ENCODE measurements at regions of chr12 and their contacts with region 1.

Region 1: DNA sequence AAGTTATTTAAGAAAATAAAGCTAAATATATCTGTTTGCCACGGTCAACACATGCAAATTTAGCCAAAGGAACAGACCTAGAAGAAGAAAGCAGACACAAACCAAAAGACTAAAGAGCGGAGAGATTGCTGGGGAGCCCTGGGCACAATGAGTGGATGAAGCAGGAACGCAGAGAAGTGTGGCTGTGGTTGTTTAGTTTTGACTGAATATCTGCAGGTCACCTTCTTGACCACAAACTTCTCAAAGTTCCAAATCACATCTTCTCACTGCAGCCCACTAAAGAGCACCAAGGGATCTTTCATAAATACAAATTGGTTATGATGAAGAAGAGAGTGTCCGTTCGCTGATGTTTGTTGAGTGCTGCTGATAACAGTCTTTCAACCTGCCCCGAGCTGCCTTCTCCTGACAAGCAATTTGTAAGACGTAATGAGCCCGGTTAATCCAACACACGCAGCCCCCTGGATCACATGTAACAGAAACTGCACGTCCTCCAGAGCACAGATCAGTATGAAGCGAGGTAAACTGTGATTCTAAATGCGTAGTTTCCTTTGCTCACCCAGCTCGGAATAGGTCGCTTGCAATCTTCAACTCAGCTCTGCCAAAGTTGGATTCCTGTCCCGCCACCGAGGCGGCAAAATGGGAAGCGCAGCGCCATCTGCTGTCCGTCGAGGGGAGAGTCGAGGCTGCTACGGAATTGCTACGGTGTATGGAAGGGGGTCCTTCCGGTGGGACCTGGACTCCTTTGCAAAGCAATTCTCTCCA is 120.8 kb downstream of the GXYLT1 start:
- DNase-seq: peak; percentile 48 to 78 (median 59)
- ATAC-seq: peak; percentile 83
- H3K4me3 ChIP-seq: peak overlapping the region; percentile 36
- H3K4me3 Mint-ChIP-seq: peak overlapping the region; percentile 73
- H3K27ac ChIP-seq: no peak overlapping the region
- H3K27ac Mint-ChIP-seq: no peak overlapping the region
- H3K4me1 ChIP-seq: peaks cover 8% of the 10 kb centered on the region
- H3K4me1 Mint-ChIP-seq: peaks cover 9% of the 10 kb centered on the region
- H3K27me3 ChIP-seq: peaks cover 3 to 8% of the 10 kb centered on the region in 2 experiments
- H3K27me3 Mint-ChIP-seq: peaks cover 25% of the 10 kb centered on the region
- CTCF ChIP-seq: peak; percentile 90

Region 2: GRCh38 chr12:40946612-40947194 is 1077.2 kb before region 1 on chr12:
- CTCF ChIA-PET with region 1: no interaction called
- POLR2A ChIA-PET with region 1: no interaction called
- intact Hi-C with region 1: loop called (anchors 5 kb)
- DNase-seq: peak in 3 of 14 experiments; percentile 35 to 41 (median 35)
- ATAC-seq: no peak
- H3K4me3 ChIP-seq: no peak overlapping the region
- H3K4me3 Mint-ChIP-seq: no peak overlapping the region
- H3K27ac ChIP-seq: no peak overlapping the region
- H3K27ac Mint-ChIP-seq: no peak overlapping the region
- H3K4me1 ChIP-seq: no peaks in the 10 kb centered on the region
- H3K4me1 Mint-ChIP-seq: no peaks in the 10 kb centered on the region
- H3K27me3 ChIP-seq: peaks cover 0 to 3% of the 10 kb centered on the region in 2 experiments
- H3K27me3 Mint-ChIP-seq: peaks cover 4% of the 10 kb centered on the region
- CTCF ChIP-seq: peak; percentile 60

Region 3: DNA sequence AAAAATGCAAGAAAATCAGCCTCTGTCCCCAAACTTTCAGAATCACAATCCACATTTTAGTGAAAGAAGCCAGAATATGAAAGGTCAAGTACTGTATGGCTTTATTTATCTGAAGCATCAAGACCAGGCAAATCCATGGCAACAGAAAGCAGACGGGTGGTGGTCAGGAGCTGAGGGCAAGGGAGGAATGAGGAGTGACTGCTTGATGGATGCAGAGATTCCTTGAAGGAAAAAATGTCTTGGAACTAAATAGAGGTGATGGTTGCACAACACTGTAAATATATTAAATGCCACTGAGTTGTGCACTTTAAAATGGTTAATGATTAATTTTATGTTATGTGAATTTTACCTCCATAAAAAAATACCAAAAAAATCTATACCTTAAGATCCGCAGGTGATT is 44.3 kb before region 1 on chr12:
- CTCF ChIA-PET with region 1: no interaction called
- POLR2A ChIA-PET with region 1: no interaction called
- intact Hi-C with region 1: no loop called
- DNase-seq: no peak
- ATAC-seq: no peak
- H3K4me3 ChIP-seq: no peak overlapping the region
- H3K4me3 Mint-ChIP-seq: no peak overlapping the region
- H3K27ac ChIP-seq: no peak overlapping the region
- H3K27ac Mint-ChIP-seq: no peak overlapping the region
- H3K4me1 ChIP-seq: no peaks in the 10 kb centered on the region
- H3K4me1 Mint-ChIP-seq: no peaks in the 10 kb centered on the region
- H3K27me3 ChIP-seq: peaks cover 0 to 6% of the 10 kb centered on the region in 2 experiments
- H3K27me3 Mint-ChIP-seq: peaks cover 15% of the 10 kb centered on the region
- CTCF ChIP-seq: no peak

Region 4: GRCh38 chr12:42407306-42407705 is 383.4 kb after region 1 on chr12:
- CTCF ChIA-PET with region 1: no interaction called
- POLR2A ChIA-PET with region 1: no interaction called
- intact Hi-C with region 1: no loop called
- DNase-seq: no peak
- ATAC-seq: no peak
- H3K4me3 ChIP-seq: no peak overlapping the region
- H3K4me3 Mint-ChIP-seq: no peak overlapping the region
- H3K27ac ChIP-seq: no peak overlapping the region
- H3K27ac Mint-ChIP-seq: no peak overlapping the region
- H3K4me1 ChIP-seq: no peaks in the 10 kb centered on the region
- H3K4me1 Mint-ChIP-seq: peaks cover 20% of the 10 kb centered on the region
- H3K27me3 ChIP-seq: no peaks in the 10 kb centered on the region
- H3K27me3 Mint-ChIP-seq: no peaks in the 10 kb centered on the region
- CTCF ChIP-seq: no peak

Region 5: DNA sequence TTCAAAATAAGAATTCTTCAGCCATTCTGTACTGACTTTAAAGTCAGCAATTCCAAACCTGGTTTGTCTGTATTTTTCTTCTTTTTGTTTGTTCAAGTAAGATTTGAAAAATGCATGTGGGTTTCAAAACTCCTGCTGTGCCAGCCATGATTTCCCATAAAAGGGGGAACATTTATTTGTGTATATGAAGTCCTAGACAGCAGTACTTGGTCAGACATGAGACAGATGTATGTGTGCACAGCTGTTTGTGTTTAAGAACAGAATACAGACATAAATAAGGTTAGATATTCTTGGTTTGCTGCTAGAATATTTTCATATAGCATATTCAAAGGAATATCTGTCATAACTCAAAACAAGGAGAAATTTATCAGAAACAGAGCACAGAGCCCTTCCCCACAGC is 1292.0 kb after region 1 on chr12:
- CTCF ChIA-PET with region 1: no interaction called
- POLR2A ChIA-PET with region 1: no interaction called
- intact Hi-C with region 1: no loop called
- DNase-seq: no peak
- ATAC-seq: no peak
- H3K4me3 ChIP-seq: no peak overlapping the region
- H3K4me3 Mint-ChIP-seq: no peak overlapping the region
- H3K27ac ChIP-seq: no peak overlapping the region
- H3K27ac Mint-ChIP-seq: no peak overlapping the region
- H3K4me1 ChIP-seq: no peaks in the 10 kb centered on the region
- H3K4me1 Mint-ChIP-seq: no peaks in the 10 kb centered on the region
- H3K27me3 ChIP-seq: no peaks in the 10 kb centered on the region
- H3K27me3 Mint-ChIP-seq: no peaks in the 10 kb centered on the region
- CTCF ChIP-seq: no peak

Measured in CD4-positive, alpha-beta T cell (primary cell).